ENCODE measurements at regions of chr9 and their contacts with region 1.

Region 1: GRCh38 chr9:124733964-124734740 is 37.0 kb downstream of the NR6A1 start:
- DNase-seq: peak; percentile 53 to 73
- H3K4me3 ChIP-seq: peak overlapping the region; percentile 19
- H3K4me3 Mint-ChIP-seq: peak overlapping the region; percentile 47
- H3K27ac Mint-ChIP-seq: peak overlapping the region; percentile 69
- H3K4me1 ChIP-seq: peaks cover 26% of the 10 kb centered on the region
- H3K4me1 Mint-ChIP-seq: peaks cover 21% of the 10 kb centered on the region
- H3K27me3 ChIP-seq: no peaks in the 10 kb centered on the region
- H3K27me3 Mint-ChIP-seq: no peaks in the 10 kb centered on the region
- CTCF ChIP-seq: no peak

Region 2: GRCh38 chr9:124639637-124640036 is 94.5 kb before region 1 on chr9:
- CTCF ChIA-PET with region 1: no interaction called
- POLR2A ChIA-PET with region 1: interaction called, 10 read pairs
- intact Hi-C with region 1: no loop called
- DNase-seq: no peak
- H3K4me3 ChIP-seq: no peak overlapping the region
- H3K4me3 Mint-ChIP-seq: no peak overlapping the region
- H3K27ac Mint-ChIP-seq: no peak overlapping the region
- H3K4me1 ChIP-seq: no peaks in the 10 kb centered on the region
- H3K4me1 Mint-ChIP-seq: no peaks in the 10 kb centered on the region
- H3K27me3 ChIP-seq: no peaks in the 10 kb centered on the region
- H3K27me3 Mint-ChIP-seq: no peaks in the 10 kb centered on the region
- CTCF ChIP-seq: no peak

Measured in Caco-2 (cell line).